Transverse colon (tissue), 4 donors: ENCODE measurements at regions of chr20 and their contacts with region 1.

Region 1: DNA sequence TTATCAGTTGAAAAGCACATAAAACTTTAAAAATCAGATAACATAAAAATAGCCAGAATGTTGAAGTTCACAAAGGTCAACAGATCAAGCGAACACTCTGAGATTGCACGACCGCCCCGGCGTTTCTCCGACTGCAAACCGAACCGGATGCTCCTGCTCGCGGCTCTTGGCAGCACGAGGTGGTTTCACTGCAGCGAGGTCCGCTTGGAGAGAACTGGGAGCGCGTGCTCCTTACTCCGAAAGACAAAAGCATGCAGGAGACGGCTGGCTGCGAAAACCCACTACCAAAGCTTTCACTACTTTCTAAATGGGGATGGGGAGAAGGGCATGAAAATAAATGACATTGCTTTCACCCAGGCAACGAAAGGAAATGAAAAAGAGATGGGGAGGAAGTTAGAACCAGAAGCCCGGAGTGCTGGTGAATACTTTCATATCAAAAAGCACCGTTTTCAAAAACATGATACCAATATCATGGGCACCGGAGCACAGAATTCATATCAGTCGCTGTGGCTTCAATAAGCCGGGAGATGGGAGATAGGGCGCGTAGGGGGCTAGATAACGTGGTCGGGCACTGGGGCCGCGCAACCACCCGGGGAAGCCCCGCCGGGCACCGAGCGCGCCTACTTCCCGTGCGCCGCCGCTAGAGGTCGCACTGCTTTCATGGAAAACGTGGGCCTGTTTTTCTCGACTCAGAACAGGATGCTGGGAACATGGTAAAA is 8.3 kb upstream of the ANKRD60 start:
- DNase-seq: peak; percentile 74
- H3K4me3 ChIP-seq: peak overlapping the region; percentile 6 to 58 (median 42)
- H3K27ac ChIP-seq: peak overlapping the region in 3 of 4 donors; percentile 19 to 32 (median 28)
- H3K4me1 ChIP-seq: peaks cover 0 to 8% (median 0%) of the 10 kb centered on the region in 4 donors
- H3K27me3 ChIP-seq: no peaks in the 10 kb centered on the region
- CTCF ChIP-seq: peak; percentile 86 to 98 (median 96)
- EP300 ChIP-seq: no peak
- POLR2A ChIP-seq: no peak

Region 2: GRCh38 chr20:57335392-57335791 is 901.4 kb before region 1 on chr20:
- in situ Hi-C with region 1: no loop called
- intact Hi-C with region 1: no loop called
- DNase-seq: no peak
- H3K4me3 ChIP-seq: no peak overlapping the region
- H3K27ac ChIP-seq: no peak overlapping the region
- H3K4me1 ChIP-seq: no peaks in the 10 kb centered on the region
- H3K27me3 ChIP-seq: peaks cover 35% of the 10 kb centered on the region
- CTCF ChIP-seq: no peak
- EP300 ChIP-seq: no peak
- POLR2A ChIP-seq: no peak

Region 3: DNA sequence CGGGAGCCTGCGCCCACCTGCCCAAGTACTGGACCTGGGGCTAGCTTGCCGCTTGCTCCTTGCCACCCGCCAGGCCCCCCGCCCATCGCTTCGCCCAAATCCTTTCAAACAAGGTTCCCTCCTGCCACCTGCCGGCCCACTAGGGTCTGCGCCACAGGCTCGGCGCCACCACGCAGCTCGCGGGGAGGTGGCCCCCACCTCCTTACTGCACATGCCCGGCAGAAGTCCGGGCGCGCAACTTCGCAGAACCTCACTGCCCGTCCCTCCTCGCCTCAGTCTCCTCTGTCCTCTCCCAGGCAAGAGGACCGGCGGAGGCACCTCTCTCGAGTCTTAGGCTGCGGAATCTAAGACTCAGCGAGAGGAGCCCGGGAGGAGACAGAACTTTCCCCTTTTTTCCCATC is 602.7 kb after region 1 on chr20:
- in situ Hi-C with region 1: loop called in 1 of 4 experiments (anchors 25 kb)
- intact Hi-C with region 1: no loop called
- DNase-seq: no peak
- H3K4me3 ChIP-seq: peak overlapping the region in 1 of 4 donors; percentile 13
- H3K27ac ChIP-seq: no peak overlapping the region
- H3K4me1 ChIP-seq: peaks cover 0 to 7% (median 3%) of the 10 kb centered on the region in 4 donors
- H3K27me3 ChIP-seq: peaks cover 55% of the 10 kb centered on the region
- CTCF ChIP-seq: peak in 4 of 5 experiments; percentile 17 to 26 (median 19)
- EP300 ChIP-seq: no peak
- POLR2A ChIP-seq: no peak

Region 4: GRCh38 chr20:59455402-59456341 is 1218.9 kb after region 1 on chr20:
- in situ Hi-C with region 1: loop called in 1 of 4 experiments (anchors 25 kb)
- intact Hi-C with region 1: no loop called
- DNase-seq: no peak
- H3K4me3 ChIP-seq: no peak overlapping the region
- H3K27ac ChIP-seq: no peak overlapping the region
- H3K4me1 ChIP-seq: no peaks in the 10 kb centered on the region
- H3K27me3 ChIP-seq: no peaks in the 10 kb centered on the region
- CTCF ChIP-seq: peak; percentile 53 to 66 (median 53)
- EP300 ChIP-seq: no peak
- POLR2A ChIP-seq: no peak